GM10248 (cell line): ENCODE measurements at regions of chr1 and their contacts with region 1.

Region 1: DNA sequence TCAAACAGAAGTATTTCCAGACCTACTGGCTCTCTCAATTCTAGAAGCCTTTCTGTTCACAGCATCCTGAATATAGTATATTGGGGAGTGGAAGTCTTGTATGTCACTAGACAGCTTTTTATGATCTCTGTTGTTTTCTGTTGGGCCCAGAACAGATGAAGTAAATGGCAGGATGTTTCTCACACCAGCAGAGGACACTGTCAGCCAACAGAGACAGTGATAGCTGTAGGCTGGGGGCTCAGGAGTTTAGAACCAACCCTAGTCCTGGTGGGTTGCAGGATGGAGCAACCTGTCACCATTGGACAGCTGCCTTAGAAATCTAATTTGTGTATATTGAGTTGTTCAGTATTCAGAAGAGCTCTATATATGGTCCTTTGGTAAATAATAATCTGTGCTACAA is 16.9 kb downstream of the AGO1 start:
- DNase-seq: no peak
- CTCF ChIP-seq: peak; percentile 12

Region 2: DNA sequence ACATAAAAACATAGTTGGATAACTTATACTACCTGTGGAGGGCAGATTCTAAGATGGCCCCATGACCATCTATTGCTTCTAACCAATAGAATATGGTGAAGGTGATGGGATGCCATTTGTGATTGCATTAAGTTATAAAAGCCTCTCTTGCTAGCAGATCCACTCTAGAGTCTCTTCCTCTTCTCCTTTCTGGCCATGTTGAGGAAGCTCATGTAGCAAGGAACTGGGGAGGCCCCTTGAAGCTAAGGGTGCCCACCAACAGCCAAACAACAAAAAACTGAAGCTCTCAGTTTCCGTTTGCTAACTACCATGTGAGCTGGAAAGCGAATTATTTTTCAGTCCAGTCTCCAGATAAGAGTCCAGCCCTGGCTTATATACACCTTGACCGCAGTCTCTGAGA is 33.0 kb before region 1 on chr1:
- CTCF ChIA-PET with region 1: no interaction called
- POLR2A ChIA-PET with region 1: no interaction called
- DNase-seq: no peak
- CTCF ChIP-seq: no peak

Region 3: DNA sequence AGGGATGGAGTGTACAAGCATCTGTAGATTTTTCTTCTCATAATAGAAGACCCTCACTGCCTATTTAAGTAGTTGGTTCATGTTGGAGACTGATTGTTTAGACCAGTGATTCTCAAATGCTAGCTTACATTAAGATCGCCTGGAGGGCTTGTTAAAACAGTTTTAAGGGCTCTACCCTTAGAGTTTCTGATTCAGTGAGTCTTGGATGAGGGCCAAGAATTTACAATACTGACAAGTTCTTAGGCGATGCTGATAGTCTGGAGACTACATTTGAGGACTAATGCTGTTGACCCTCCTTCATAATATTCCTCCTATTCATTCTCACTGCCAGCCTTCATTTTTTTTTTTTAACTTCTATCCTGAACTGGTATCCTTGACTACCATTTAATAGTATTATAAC is 15.8 kb after region 1 on chr1:
- CTCF ChIA-PET with region 1: interaction called, 11 read pairs
- POLR2A ChIA-PET with region 1: no interaction called
- DNase-seq: no peak
- CTCF ChIP-seq: no peak

Region 4: GRCh38 chr1:36023098-36023769 is 123.3 kb after region 1 on chr1:
- CTCF ChIA-PET with region 1: no interaction called
- POLR2A ChIA-PET with region 1: no interaction called
- DNase-seq: peak; percentile 57
- CTCF ChIP-seq: no peak